ENCODE measurements at regions of chr15 and their contacts with region 1.

Region 1: DNA sequence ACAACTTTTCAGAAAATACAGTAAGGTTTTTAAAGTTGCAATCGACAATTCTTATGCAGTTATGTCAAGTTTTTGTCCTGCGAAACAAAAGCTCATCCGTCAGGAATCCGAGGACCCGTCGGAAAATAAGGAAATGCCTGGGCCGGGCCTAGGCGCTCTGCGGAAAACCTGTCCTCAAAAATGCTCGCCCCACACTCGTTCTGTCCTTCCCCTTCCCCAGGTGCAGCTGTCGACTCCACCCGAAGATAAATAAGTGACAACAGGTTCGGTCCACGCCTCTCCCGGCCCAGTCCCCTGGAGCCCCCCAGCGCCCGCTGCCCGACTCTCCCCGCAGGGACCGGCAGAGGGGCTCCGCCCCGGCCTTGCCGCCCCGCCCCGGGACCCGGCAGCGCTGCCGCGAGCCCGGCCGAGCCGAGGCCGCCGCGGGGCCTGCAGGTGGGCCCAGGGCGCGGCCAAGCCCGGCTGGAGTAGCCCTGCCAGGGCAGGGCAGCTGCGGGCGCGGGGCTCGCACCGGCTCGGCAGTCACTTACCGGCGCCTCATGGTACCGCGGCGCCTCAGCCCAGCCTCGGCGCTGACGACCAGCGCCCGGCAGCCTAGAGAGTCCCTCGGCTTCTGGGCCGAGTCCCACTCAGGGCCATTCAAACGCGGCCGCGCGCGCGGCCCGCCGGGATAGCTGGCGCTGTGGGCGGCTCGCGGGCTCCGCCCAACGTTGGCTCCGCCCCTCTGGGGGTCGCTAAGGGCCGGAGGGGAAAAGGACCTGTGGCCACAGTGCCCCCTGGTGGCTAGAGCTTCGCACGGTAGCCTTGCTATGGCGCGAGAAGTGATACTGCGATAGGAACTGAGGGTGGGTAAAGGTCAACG is at the start of gene KATNBL1:
- DNase-seq: peak; percentile 95 to 98 (median 98)
- H3K4me3 ChIP-seq: peak within 1 kb of the TSS; percentile 55
- H3K27ac ChIP-seq: peak within 1 kb of the TSS; percentile 44 to 79
- H3K4me1 ChIP-seq: peaks cover 4% of the 10 kb centered on the region
- H3K27me3 ChIP-seq: no peaks in the 10 kb centered on the region
- CTCF ChIP-seq: peak; percentile 87 to 97 (median 93)
- EP300 ChIP-seq: no peak
- POLR2A ChIP-seq: peak; percentile 44
- total RNA-seq, gene KATNBL1: 23.7 to 52.2 (median 37.4) TPM

Region 2: DNA sequence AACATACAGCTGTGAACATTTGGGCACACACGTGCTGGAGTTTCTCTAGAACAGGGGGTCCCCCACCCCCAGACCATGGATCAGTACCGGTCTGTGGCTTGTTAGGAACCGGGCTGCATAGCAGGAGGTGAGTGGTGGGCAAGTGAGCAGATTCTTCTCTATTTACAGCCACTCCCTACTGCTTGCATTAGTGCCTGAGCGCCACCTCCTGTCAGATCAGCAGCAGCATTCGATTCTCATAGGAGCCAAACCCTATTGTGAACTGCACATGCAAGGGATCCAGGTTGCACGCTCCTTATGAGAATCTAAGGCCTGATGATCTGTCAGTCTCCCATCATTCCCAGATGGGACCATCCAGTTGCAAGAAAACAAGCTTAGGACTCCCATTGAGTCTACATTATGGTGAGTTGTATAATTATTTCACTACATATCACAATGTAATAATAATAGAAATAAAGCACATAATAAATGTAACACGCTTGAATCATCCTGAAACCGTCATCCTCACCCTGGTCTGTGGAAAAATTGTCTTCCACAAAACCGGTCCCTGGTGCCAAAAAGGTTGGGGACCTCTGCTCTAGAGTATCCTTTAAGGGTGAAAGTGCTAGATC is 215.5 kb before region 1 on chr15:
- intact Hi-C with region 1: no loop called
- DNase-seq: no peak
- H3K4me3 ChIP-seq: no peak overlapping the region
- H3K27ac ChIP-seq: no peak overlapping the region
- H3K4me1 ChIP-seq: peaks cover 1% of the 10 kb centered on the region
- H3K27me3 ChIP-seq: no peaks in the 10 kb centered on the region
- CTCF ChIP-seq: no peak
- EP300 ChIP-seq: no peak
- POLR2A ChIP-seq: no peak

Region 3: GRCh38 chr15:34065941-34066340 is 143.7 kb before region 1 on chr15:
- intact Hi-C with region 1: loop called in 3 of 4 experiments (anchors 5 to 10 kb)
- DNase-seq: no peak
- H3K4me3 ChIP-seq: no peak overlapping the region
- H3K27ac ChIP-seq: no peak overlapping the region
- H3K4me1 ChIP-seq: no peaks in the 10 kb centered on the region
- H3K27me3 ChIP-seq: no peaks in the 10 kb centered on the region
- CTCF ChIP-seq: no peak
- EP300 ChIP-seq: no peak
- POLR2A ChIP-seq: no peak